Activated CD8-positive, alpha-beta T cell treated with anti-CD3 and anti-CD28 coated beads for 36 hours (primary cell): ENCODE measurements at regions of chr10 and their contacts with region 1.

Region 1: GRCh38 chr10:72088889-72089575 is 681 bp upstream of the SPOCK2 start:
- DNase-seq: peak; percentile 74
- ATAC-seq: peak; percentile 32
- H3K4me3 Mint-ChIP-seq: peak overlapping the region; percentile 96
- H3K27ac Mint-ChIP-seq: peak overlapping the region; percentile 97
- H3K4me1 Mint-ChIP-seq: peaks cover 58% of the 10 kb centered on the region
- H3K27me3 Mint-ChIP-seq: no peaks in the 10 kb centered on the region
- CTCF ChIP-seq: no peak

Region 2: DNA sequence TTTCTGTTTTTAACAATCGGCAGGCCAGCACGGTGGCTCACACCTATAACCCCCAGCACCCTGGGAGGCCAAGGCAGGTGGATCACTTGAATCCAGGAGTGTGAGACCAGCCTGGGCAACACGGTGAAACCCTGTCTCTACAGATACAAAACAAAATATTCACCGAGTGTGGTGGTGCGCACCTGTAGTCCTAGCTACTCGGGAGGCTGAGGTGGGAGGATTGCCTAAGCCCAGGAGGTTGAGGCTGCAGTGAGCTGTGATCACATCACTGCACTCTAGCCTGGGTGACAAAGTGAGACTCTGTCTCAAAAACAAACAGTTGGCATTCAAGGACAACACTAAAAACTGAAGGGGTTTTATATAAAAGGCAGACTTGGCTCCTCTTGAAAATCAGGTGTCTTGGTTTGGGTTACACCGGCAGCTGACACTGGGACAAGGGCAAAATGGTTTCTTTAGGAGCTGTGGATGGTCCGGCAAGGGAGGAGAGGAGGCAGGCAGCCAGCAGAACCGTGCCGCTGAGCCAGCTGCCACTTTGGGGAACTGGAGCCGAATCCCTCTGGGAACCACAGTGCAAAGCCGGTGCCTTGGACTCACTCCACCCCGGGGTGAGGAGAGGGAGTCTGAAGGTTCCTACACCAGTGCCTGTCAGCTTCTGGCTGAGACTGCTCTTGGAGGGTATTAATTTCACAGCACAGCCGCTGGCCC is 72.3 kb before region 1 on chr10:
- CTCF ChIA-PET with region 1: no interaction called
- POLR2A ChIA-PET with region 1: no interaction called
- intact Hi-C with region 1: no loop called
- DNase-seq: no peak
- ATAC-seq: no peak
- H3K4me3 Mint-ChIP-seq: no peak overlapping the region
- H3K27ac Mint-ChIP-seq: no peak overlapping the region
- H3K4me1 Mint-ChIP-seq: no peaks in the 10 kb centered on the region
- H3K27me3 Mint-ChIP-seq: no peaks in the 10 kb centered on the region
- CTCF ChIP-seq: no peak

Region 3: GRCh38 chr10:72069751-72070526 is 19.1 kb before region 1 on chr10:
- CTCF ChIA-PET with region 1: interaction called, 4 read pairs
- POLR2A ChIA-PET with region 1: interaction called, 12 read pairs
- intact Hi-C with region 1: no loop called
- DNase-seq: no peak
- ATAC-seq: peak; percentile 24
- H3K4me3 Mint-ChIP-seq: no peak overlapping the region
- H3K27ac Mint-ChIP-seq: peak overlapping the region; percentile 36
- H3K4me1 Mint-ChIP-seq: peaks cover 50% of the 10 kb centered on the region
- H3K27me3 Mint-ChIP-seq: no peaks in the 10 kb centered on the region
- CTCF ChIP-seq: peak; percentile 37

Region 4: GRCh38 chr10:72107325-72108003 is 18.4 kb after region 1 on chr10:
- CTCF ChIA-PET with region 1: interaction called, 10 read pairs
- POLR2A ChIA-PET with region 1: interaction called, 8 read pairs
- intact Hi-C with region 1: no loop called
- DNase-seq: peak; percentile 56
- ATAC-seq: peak; percentile 56
- H3K4me3 Mint-ChIP-seq: peak overlapping the region; percentile 69
- H3K27ac Mint-ChIP-seq: peak overlapping the region; percentile 86
- H3K4me1 Mint-ChIP-seq: peaks cover 70% of the 10 kb centered on the region
- H3K27me3 Mint-ChIP-seq: no peaks in the 10 kb centered on the region
- CTCF ChIP-seq: no peak

Region 5: GRCh38 chr10:72215652-72216549 is 126.9 kb after region 1 on chr10 and contains the starts of genes ANAPC16 and ASCC1:
- CTCF ChIA-PET with region 1: interaction called, 3 read pairs
- POLR2A ChIA-PET with region 1: interaction called, 7 read pairs
- intact Hi-C with region 1: loop called (anchors 5 kb)
- DNase-seq: peak; percentile 94
- ATAC-seq: peak; percentile 85
- H3K4me3 Mint-ChIP-seq: peak within 1 kb of the TSS; percentile 93
- H3K27ac Mint-ChIP-seq: peak within 1 kb of the TSS; percentile 95
- H3K4me1 Mint-ChIP-seq: peaks cover 40% of the 10 kb centered on the region
- H3K27me3 Mint-ChIP-seq: no peaks in the 10 kb centered on the region
- CTCF ChIP-seq: no peak
- total RNA-seq, gene ANAPC16: 94.6 to 101 TPM
- total RNA-seq, gene ASCC1: 61.6 to 66.2 TPM

Region 6: GRCh38 chr10:72283131-72283530 is 194.1 kb after region 1 on chr10:
- CTCF ChIA-PET with region 1: no interaction called
- POLR2A ChIA-PET with region 1: no interaction called
- intact Hi-C with region 1: no loop called
- DNase-seq: no peak
- ATAC-seq: no peak
- H3K4me3 Mint-ChIP-seq: no peak overlapping the region
- H3K27ac Mint-ChIP-seq: no peak overlapping the region
- H3K4me1 Mint-ChIP-seq: peaks cover 30% of the 10 kb centered on the region
- H3K27me3 Mint-ChIP-seq: no peaks in the 10 kb centered on the region
- CTCF ChIP-seq: no peak